ENCODE measurements at regions of chr4 and their contacts with region 1.

Region 1: DNA sequence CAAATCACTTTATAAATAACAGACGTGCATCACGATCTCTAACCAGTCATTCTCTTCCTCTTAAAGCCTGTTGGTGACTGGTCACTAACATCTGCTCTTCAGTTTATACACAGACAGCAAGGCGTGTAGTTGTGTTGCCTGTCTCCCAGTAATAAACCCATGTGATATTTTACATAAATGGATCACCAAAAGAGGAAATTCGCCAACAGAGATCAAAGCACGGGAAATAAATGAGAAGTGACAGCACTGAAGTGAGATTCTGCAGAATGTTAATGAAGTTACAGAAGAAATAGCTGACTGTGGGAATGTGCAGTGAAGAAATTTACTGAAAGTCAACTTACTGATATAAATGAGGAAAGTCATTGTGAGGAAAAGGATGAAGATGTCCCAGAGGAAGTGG is 47.0 kb downstream of the AFF1 start:
- DNase-seq: no peak
- H3K4me3 ChIP-seq: no peak overlapping the region
- CTCF ChIP-seq: no peak

Region 2: GRCh38 chr4:87038837-87039615 is 57.2 kb after region 1 on chr4:
- in situ Hi-C with region 1: loop called (anchors 5 kb)
- DNase-seq: peak; percentile 68
- H3K4me3 ChIP-seq: no peak overlapping the region
- CTCF ChIP-seq: no peak

Measured in astrocyte of the cerebellum (primary cell).